OCI-LY7 (cell line): ENCODE measurements at regions of chr1 and their contacts with region 1.

Region 1: GRCh38 chr1:244835276-244836134 is at the start of gene COX20:
- DNase-seq: peak; percentile 94
- H3K4me3 ChIP-seq: peak within 1 kb of the TSS; percentile 88
- H3K27ac ChIP-seq: peak within 1 kb of the TSS; percentile 94
- H3K4me1 ChIP-seq: peaks cover 78% of the 10 kb centered on the region
- CTCF ChIP-seq: no peak
- total RNA-seq, gene COX20: 12.7 and 12.9 TPM in 2 replicates

Region 2: DNA sequence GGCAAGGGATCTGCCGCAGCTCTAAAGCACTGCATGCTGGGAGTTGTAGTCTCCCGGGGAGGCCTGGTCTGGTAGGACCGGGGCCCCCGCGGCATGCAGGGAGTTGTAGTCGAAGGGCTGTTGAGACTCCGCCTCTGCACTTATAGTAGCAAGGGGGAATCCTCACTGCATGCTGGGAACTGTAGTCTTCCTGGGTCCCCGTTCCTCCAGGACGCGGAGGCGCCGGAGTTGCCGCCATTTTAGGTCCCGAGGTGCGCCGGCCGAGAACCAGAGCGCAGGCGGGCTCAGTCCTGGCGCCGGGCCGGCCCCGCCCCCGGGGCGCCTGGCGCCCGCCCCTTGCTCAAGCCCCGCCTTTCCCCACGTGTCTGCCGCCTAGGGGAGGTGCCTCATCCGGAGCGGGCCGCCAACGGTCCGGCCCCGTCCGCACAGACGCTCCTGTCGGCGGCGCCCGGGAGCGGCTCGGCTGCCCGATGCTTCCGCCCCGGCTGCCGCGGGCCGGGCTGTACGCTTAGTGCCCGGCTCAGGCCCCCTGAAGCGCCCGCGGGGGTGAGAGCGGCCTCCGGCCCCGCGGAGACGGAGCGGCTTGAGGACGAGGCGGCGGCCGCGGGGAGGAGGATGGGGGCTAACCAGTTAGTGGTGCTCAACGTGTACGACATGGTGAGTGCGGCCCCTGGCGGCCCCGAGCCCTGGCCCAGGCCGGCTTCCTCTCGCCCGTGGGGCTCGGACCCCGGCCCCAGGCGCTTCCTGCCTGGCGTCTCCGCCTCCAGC is 182.6 kb before region 1 on chr1 and contains the start of gene DESI2:
- CTCF ChIA-PET with region 1: no interaction called
- POLR2A ChIA-PET with region 1: interaction called, 7 read pairs
- intact Hi-C with region 1: loop called (anchors 1 kb)
- DNase-seq: peak; percentile 100
- H3K4me3 ChIP-seq: peak within 1 kb of the TSS; percentile 82
- H3K27ac ChIP-seq: peak within 1 kb of the TSS; percentile 81
- H3K4me1 ChIP-seq: peaks cover 27% of the 10 kb centered on the region
- CTCF ChIP-seq: peak; percentile 71
- total RNA-seq, gene DESI2: 40.0 and 40.6 TPM in 2 replicates

Region 3: DNA sequence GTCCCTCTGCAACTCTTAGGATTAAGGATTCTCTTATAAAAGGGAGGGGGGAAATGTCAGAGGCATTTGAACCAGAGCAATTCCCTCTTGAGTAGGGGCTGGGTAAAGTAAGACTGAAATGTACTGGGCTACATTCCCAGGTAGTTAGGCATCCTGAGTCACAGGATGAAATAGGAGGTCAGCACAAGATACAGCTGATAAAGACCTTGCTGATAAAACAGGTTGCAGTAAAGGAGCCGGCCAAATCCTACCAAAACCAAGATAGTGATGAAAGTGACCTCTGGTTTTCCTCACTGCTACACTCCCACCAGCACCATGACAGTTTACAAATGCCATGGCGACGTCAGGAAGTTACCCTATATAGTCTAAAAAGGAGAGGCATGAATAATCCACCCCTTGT is 14.4 kb before region 1 on chr1:
- CTCF ChIA-PET with region 1: no interaction called
- POLR2A ChIA-PET with region 1: no interaction called
- intact Hi-C with region 1: no loop called
- DNase-seq: no peak
- H3K4me3 ChIP-seq: no peak overlapping the region
- H3K27ac ChIP-seq: no peak overlapping the region
- H3K4me1 ChIP-seq: peaks cover under 1% of the 10 kb centered on the region
- CTCF ChIP-seq: no peak

Region 4: DNA sequence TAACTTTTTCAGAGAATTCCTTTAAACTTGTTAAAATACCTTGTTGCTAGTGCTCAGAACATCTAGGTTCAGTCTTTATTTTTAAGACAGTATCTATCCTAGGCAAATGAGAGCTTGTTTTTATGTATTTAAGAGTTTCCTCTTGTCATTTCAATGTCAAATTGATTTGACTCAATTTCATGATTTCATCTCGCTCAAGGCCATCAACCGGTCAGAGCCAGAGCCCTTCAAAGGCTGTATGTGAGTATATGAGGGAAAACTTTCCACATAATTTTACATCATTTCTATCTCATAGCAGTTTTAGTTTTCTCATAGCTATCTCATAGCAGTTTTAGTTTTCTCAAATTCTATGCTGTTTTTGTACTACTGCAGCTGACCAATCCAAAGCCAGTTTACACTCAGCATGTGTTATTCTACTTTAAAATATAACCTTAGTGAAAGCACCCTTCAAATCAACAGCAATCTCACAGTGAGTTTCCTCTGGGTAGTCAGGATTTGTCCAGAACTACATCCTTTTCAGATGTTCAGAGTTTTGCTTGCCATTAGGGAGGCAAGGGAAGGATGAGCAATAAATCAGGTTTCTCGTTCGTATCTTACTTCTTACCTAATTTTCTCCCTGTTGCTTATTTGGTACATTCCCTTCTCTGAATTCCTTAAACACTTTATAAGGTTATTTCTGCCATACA is 16.2 kb after region 1 on chr1:
- CTCF ChIA-PET with region 1: no interaction called
- POLR2A ChIA-PET with region 1: interaction called, 17 read pairs
- intact Hi-C with region 1: no loop called
- DNase-seq: no peak
- H3K4me3 ChIP-seq: no peak overlapping the region
- H3K27ac ChIP-seq: no peak overlapping the region
- H3K4me1 ChIP-seq: peaks cover 9% of the 10 kb centered on the region
- CTCF ChIP-seq: no peak

Region 5: DNA sequence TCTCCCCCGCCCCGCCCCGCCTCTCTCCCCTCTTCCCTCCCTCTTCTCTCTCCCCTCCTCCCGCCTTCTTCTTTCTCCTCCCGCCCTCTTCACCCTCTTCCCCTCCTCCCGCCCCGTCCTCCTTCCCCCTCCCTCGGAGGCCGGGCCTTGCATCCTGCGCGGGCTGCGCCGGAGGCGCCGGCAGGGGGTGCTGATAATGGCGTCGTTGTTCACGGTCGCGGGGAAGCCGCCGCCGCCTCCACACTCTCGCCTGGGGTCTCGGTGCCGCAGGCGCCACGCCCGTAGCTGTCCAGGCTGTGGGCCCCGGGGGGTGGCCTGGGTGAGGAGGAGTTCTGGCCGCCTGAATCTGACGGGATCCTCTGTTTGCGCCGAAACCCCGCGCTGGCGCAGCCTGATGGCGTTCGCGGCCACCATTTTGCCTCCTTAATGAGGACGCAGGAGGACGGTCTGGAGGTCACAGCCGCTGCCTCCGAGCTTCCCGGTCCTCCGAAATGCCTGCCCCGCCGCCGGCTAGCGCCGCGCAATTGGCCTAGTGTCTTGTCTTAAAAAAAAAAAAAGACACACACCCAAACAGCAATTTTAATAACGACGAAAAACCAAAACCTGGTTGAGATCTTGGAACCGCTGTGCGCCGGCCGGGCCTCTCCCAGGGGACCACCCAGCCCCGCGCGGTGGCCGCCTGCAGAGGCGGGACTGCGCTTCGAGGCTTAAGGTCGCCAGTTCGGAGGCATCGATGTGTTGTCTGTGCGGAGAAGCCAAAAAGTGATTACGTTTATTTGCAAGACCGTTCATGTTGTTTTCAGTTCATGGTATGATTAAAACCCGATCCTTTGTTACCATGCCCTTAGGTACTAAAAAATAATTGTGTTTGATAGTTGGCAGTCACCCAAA is 135.4 kb after region 1 on chr1:
- CTCF ChIA-PET with region 1: no interaction called
- POLR2A ChIA-PET with region 1: interaction called, 27 read pairs
- intact Hi-C with region 1: loop called (anchors 1 kb)
- DNase-seq: peak; percentile 96
- H3K4me3 ChIP-seq: peak overlapping the region; percentile 85
- H3K27ac ChIP-seq: peak overlapping the region; percentile 97
- H3K4me1 ChIP-seq: peaks cover 30% of the 10 kb centered on the region
- CTCF ChIP-seq: peak; percentile 75

Region 6: GRCh38 chr1:245807306-245807705 is 971.8 kb after region 1 on chr1:
- CTCF ChIA-PET with region 1: no interaction called
- POLR2A ChIA-PET with region 1: no interaction called
- intact Hi-C with region 1: loop called (anchors 10 kb)
- DNase-seq: peak; percentile 75
- H3K4me3 ChIP-seq: peak overlapping the region; percentile 50
- H3K27ac ChIP-seq: peak overlapping the region; percentile 90
- H3K4me1 ChIP-seq: peaks cover 69% of the 10 kb centered on the region
- CTCF ChIP-seq: no peak